Breast epithelium (tissue), 4 donors: ENCODE measurements at regions of chr2 and their contacts with region 1.

Region 1: DNA sequence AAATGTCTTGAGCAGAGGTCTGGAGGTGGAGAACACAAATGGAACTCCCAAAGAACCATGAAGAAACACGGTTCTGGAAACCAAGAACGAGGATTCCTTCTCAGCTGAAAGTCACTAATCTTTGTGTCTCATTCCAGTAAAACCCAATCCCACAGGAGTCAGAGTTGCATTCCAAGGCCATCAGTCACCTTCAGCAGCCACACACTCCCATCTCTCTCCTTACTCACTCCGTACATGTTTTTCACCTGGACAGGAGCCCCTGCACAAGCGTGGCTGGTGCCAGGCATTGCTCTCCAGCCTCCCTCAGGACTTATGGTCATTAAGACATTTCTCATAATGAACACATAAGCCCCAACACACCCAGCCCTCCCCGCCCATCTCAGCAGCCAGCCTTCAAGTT is 175.4 kb upstream of the SIX2 start:
- DNase-seq: no peak
- H3K4me3 ChIP-seq: no peak overlapping the region
- H3K27ac ChIP-seq: no peak overlapping the region
- H3K4me1 ChIP-seq: no peaks in the 10 kb centered on the region
- H3K27me3 ChIP-seq: no peaks in the 10 kb centered on the region
- CTCF ChIP-seq: no peak
- POLR2A ChIP-seq: no peak

Region 2: GRCh38 chr2:44753552-44754285 is 430.9 kb before region 1 on chr2:
- intact Hi-C with region 1: no loop called
- DNase-seq: no peak
- H3K4me3 ChIP-seq: no peak overlapping the region
- H3K27ac ChIP-seq: no peak overlapping the region
- H3K4me1 ChIP-seq: no peaks in the 10 kb centered on the region
- H3K27me3 ChIP-seq: no peaks in the 10 kb centered on the region
- CTCF ChIP-seq: no peak
- POLR2A ChIP-seq: no peak

Region 3: DNA sequence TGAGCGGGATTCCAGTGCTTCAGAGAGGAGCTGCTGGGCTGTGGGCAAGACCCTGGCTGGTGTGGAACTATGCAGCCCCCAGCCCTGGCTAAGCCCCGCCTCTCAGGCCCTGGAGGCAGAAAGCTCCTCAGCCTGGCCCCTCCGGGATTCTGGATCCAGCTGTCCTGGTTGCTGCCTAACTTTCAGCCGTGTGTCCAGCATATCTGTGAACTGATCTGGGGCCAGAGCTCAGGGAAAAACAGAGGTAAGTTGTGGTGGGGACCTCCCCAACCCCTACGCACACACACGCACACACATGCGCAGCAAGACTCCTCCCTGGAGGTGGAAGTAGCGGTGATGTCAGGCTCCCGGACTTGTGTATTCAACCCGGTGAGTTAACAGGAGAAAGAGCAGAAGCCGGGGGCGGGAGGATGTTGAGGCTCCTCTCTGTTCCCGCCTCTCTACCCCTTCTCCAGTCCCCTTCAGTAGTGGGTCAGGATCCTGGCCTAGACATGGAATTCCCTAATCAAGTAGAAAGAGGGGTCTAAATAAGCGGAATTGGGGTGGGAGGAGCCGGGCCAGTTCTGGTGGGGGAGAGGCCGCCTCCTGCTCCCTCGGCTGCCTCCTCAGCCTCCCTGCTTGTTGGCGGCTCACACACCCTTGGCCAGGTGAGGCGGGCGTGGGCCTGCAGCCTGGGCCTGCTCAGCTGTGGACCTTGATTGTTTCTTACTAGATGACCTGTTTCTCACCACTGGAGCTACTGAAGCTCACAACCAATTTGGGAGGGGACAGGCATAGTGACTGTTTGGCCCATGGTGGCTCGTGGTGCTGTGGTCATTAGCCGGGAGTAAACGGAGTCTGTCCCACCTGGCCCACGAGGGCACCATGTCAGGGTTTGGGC is 208.8 kb before region 1 on chr2:
- intact Hi-C with region 1: loop called (anchors 5 kb)
- DNase-seq: no peak
- H3K4me3 ChIP-seq: no peak overlapping the region
- H3K27ac ChIP-seq: no peak overlapping the region
- H3K4me1 ChIP-seq: no peaks in the 10 kb centered on the region
- H3K27me3 ChIP-seq: peaks cover 0 to 3% of the 10 kb centered on the region in 2 donors
- CTCF ChIP-seq: no peak
- POLR2A ChIP-seq: no peak